MCF 10A (cell line): ENCODE measurements at regions of chr15 and their contacts with region 1.

Region 1: GRCh38 chr15:88638626-88639372 is at the start of gene ISG20:
- DNase-seq: peak; percentile 98
- H3K4me3 Mint-ChIP-seq: peak within 1 kb of the TSS; percentile 81
- H3K27ac Mint-ChIP-seq: peak within 1 kb of the TSS; percentile 96
- H3K4me1 Mint-ChIP-seq: peaks cover 40% of the 10 kb centered on the region
- H3K27me3 Mint-ChIP-seq: no peaks in the 10 kb centered on the region
- CTCF ChIP-seq: peak; percentile 23
- total RNA-seq, gene ISG20: 9.7 and 20.0 TPM in 2 replicates

Region 2: DNA sequence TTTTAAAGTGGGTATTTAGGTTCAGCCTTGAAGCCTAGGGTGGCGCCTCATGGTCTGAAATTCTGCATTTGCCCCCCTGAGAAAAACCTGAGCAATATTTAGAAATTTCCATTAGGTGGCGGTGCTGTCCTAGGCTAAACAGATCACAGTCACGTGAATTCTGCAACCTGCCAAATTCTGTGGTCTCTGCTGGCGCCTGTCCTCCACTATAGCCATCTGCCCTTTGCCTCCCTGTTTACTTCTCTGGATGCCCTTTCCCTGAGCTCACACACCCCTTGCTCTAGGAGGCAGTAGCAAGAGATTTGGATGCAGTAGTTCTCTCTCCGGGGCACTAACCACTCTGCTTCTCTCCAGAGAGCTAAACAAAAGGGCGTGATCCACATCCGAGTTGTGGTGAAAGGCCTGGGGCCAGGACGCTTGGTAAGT is 162.2 kb before region 1 on chr15:
- CTCF ChIA-PET with region 1: interaction called, 3 read pairs
- POLR2A ChIA-PET with region 1: interaction called, 4 read pairs
- intact Hi-C with region 1: loop called (anchors 1 kb)
- DNase-seq: peak; percentile 49
- H3K4me3 Mint-ChIP-seq: no peak overlapping the region
- H3K27ac Mint-ChIP-seq: no peak overlapping the region
- H3K4me1 Mint-ChIP-seq: no peaks in the 10 kb centered on the region
- H3K27me3 Mint-ChIP-seq: no peaks in the 10 kb centered on the region
- CTCF ChIP-seq: peak; percentile 50

Region 3: GRCh38 chr15:88620995-88621772 is 17.6 kb before region 1 on chr15 and contains the start of gene AEN:
- CTCF ChIA-PET with region 1: interaction called, 11 read pairs
- POLR2A ChIA-PET with region 1: interaction called, 14 read pairs
- intact Hi-C with region 1: loop called (anchors 1 kb)
- DNase-seq: peak; percentile 95
- H3K4me3 Mint-ChIP-seq: peak within 1 kb of the TSS; percentile 87
- H3K27ac Mint-ChIP-seq: peak within 1 kb of the TSS; percentile 81
- H3K4me1 Mint-ChIP-seq: peaks cover 25% of the 10 kb centered on the region
- H3K27me3 Mint-ChIP-seq: no peaks in the 10 kb centered on the region
- CTCF ChIP-seq: no peak
- total RNA-seq, gene AEN: 48.7 and 67.6 TPM in 2 replicates

Region 4: GRCh38 chr15:88690331-88690730 is 51.5 kb after region 1 on chr15:
- CTCF ChIA-PET with region 1: no interaction called
- POLR2A ChIA-PET with region 1: no interaction called
- intact Hi-C with region 1: no loop called
- DNase-seq: no peak
- H3K4me3 Mint-ChIP-seq: no peak overlapping the region
- H3K27ac Mint-ChIP-seq: no peak overlapping the region
- H3K4me1 Mint-ChIP-seq: no peaks in the 10 kb centered on the region
- H3K27me3 Mint-ChIP-seq: peaks cover 26% of the 10 kb centered on the region
- CTCF ChIP-seq: no peak